ENCODE measurements at regions of chr17 and their contacts with region 1.

Region 1: DNA sequence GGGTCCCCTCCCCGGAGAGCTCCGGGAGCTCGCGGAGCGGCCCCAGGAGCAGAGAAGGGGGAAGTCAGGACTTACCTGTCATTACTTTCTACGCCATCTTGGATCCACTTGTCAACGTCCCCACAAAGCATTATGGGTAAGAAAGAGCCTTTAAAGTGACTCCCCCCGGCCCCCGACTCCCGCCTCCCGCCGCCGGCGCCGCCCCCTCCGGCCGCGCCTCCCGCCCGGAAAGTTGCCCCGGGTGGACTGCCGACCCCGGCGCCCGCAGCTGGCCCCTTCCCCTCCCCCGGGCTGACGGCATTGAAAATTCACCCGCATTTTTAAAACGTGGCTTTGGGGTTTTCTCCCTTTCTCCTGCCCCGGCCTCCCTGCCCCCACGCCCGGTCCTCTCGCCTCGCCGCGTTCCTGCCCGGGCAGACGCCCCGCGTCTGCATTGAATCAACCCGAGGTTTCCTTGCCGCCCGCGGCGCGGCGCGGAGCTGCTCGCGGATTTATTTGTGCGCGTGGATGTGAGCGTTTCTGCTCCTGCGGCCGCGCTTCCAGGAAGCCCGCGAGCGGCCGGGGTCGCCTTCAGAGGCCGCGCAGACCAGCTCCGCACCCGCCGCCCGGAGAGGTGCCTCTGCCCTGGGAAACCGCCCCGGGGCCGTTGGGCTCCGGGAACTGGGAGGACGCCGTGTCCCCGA is at the start of gene HELZ:
- DNase-seq: peak; percentile 73 to 87
- ATAC-seq: peak; percentile 50 to 78 (median 62)
- H3K4me3 ChIP-seq: peak within 1 kb of the TSS; percentile 95
- H3K4me3 Mint-ChIP-seq: peak within 1 kb of the TSS; percentile 96
- H3K27ac ChIP-seq: peak within 1 kb of the TSS; percentile 90
- H3K27ac Mint-ChIP-seq: peak within 1 kb of the TSS; percentile 84 to 94
- H3K4me1 ChIP-seq: peaks cover 42% of the 10 kb centered on the region
- H3K4me1 Mint-ChIP-seq: peaks cover 59 to 60% of the 10 kb centered on the region in 2 donors
- H3K27me3 ChIP-seq: no peaks in the 10 kb centered on the region
- H3K27me3 Mint-ChIP-seq: no peaks in the 10 kb centered on the region
- CTCF ChIP-seq: no peak
- total RNA-seq, gene HELZ: 274 to 355 (median 292) TPM

Region 2: DNA sequence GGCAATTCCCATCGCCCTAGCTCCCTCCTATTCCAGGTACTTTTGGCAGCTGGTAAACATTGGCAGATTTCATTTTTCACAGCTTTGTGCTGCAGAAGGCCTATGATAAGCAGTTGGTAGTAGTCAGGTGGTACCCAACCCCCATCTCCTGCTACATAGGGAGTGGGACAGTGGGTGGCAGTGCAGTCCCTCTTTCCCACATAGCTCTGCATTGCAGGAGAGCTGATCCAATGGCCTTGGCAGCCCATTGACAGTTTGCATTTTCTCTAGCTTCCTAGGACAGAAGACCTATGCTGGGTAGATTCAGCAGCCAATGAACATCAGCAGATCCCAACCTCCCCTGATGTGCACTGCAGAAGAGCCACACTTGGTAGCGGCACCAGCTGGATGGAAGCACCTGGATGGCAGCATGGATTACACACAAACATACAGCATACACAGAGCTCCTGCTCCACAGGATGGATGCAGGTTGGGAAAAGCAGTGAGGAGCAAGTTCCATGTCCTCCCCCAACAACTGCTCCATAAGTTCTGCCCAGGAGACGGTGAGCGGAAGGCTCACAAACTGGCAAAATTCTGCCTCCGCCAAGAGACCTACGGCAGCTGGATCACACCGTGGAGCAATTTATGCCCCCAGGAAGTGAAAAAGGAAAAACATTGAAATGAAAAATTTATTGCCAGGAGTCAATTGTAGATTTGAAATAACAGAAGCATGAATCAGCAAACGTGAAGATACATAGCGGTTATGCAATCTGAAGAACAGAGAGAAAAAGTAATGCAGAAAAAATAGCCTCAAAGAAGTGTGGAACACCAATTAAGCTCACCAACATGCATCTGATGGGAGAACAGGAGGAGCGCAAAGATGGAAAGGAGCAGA is 105.2 kb before region 1 on chr17:
- intact Hi-C with region 1: loop called (anchors 5 kb)
- DNase-seq: no peak
- ATAC-seq: no peak
- H3K4me3 ChIP-seq: no peak overlapping the region
- H3K4me3 Mint-ChIP-seq: no peak overlapping the region
- H3K27ac ChIP-seq: no peak overlapping the region
- H3K27ac Mint-ChIP-seq: peak overlapping the region; percentile 83 to 86
- H3K4me1 ChIP-seq: peaks cover 14% of the 10 kb centered on the region
- H3K4me1 Mint-ChIP-seq: peaks cover 38% of the 10 kb centered on the region in 2 donors
- H3K27me3 ChIP-seq: no peaks in the 10 kb centered on the region
- H3K27me3 Mint-ChIP-seq: no peaks in the 10 kb centered on the region
- CTCF ChIP-seq: no peak

Region 3: GRCh38 chr17:67151717-67152116 is 93.5 kb before region 1 on chr17:
- intact Hi-C with region 1: loop called (anchors 5 kb)
- DNase-seq: no peak
- ATAC-seq: no peak
- H3K4me3 ChIP-seq: no peak overlapping the region
- H3K4me3 Mint-ChIP-seq: peak overlapping the region; percentile 3
- H3K27ac ChIP-seq: no peak overlapping the region
- H3K27ac Mint-ChIP-seq: peak overlapping the region; percentile 52 to 78
- H3K4me1 ChIP-seq: peaks cover 3% of the 10 kb centered on the region
- H3K4me1 Mint-ChIP-seq: peaks cover 34 to 35% of the 10 kb centered on the region in 2 donors
- H3K27me3 ChIP-seq: no peaks in the 10 kb centered on the region
- H3K27me3 Mint-ChIP-seq: no peaks in the 10 kb centered on the region
- CTCF ChIP-seq: no peak

Region 4: GRCh38 chr17:67221062-67221998 is 23.9 kb before region 1 on chr17:
- intact Hi-C with region 1: no loop called
- DNase-seq: peak in 1 of 2 donors; percentile 78
- ATAC-seq: peak; percentile 29 to 87 (median 68)
- H3K4me3 ChIP-seq: no peak overlapping the region
- H3K4me3 Mint-ChIP-seq: peak overlapping the region; percentile 18
- H3K27ac ChIP-seq: no peak overlapping the region
- H3K27ac Mint-ChIP-seq: peak overlapping the region; percentile 37 to 80
- H3K4me1 ChIP-seq: peaks cover 21% of the 10 kb centered on the region
- H3K4me1 Mint-ChIP-seq: peaks cover 68 to 72% of the 10 kb centered on the region in 2 donors
- H3K27me3 ChIP-seq: no peaks in the 10 kb centered on the region
- H3K27me3 Mint-ChIP-seq: no peaks in the 10 kb centered on the region
- CTCF ChIP-seq: no peak

Region 5: GRCh38 chr17:67258821-67259468 is 13.7 kb after region 1 on chr17:
- intact Hi-C with region 1: loop called (anchors 1 kb)
- DNase-seq: peak; percentile 71 to 75
- ATAC-seq: peak; percentile 75 to 92 (median 85)
- H3K4me3 ChIP-seq: no peak overlapping the region
- H3K4me3 Mint-ChIP-seq: peak overlapping the region; percentile 54
- H3K27ac ChIP-seq: peak overlapping the region; percentile 45
- H3K27ac Mint-ChIP-seq: peak overlapping the region; percentile 69 to 92
- H3K4me1 ChIP-seq: peaks cover 46% of the 10 kb centered on the region
- H3K4me1 Mint-ChIP-seq: peaks cover 41 to 44% of the 10 kb centered on the region in 2 donors
- H3K27me3 ChIP-seq: no peaks in the 10 kb centered on the region
- H3K27me3 Mint-ChIP-seq: no peaks in the 10 kb centered on the region
- CTCF ChIP-seq: no peak

Region 6: GRCh38 chr17:67293251-67294203 is 48.3 kb after region 1 on chr17:
- intact Hi-C with region 1: loop called (anchors 5 kb)
- DNase-seq: peak; percentile 61 to 85
- ATAC-seq: peak; percentile 89 to 98 (median 98)
- H3K4me3 ChIP-seq: no peak overlapping the region
- H3K4me3 Mint-ChIP-seq: peak overlapping the region; percentile 35
- H3K27ac ChIP-seq: no peak overlapping the region
- H3K27ac Mint-ChIP-seq: no peak overlapping the region
- H3K4me1 ChIP-seq: peaks cover 14% of the 10 kb centered on the region
- H3K4me1 Mint-ChIP-seq: peaks cover 14 to 19% of the 10 kb centered on the region in 2 donors
- H3K27me3 ChIP-seq: no peaks in the 10 kb centered on the region
- H3K27me3 Mint-ChIP-seq: no peaks in the 10 kb centered on the region
- CTCF ChIP-seq: peak; percentile 86

Region 7: GRCh38 chr17:67366193-67367157 is 121.3 kb after region 1 on chr17 and contains the start of gene PSMD12:
- intact Hi-C with region 1: loop called (anchors 10 kb)
- DNase-seq: peak; percentile 95 to 96
- ATAC-seq: peak; percentile 94 to 100 (median 97)
- H3K4me3 ChIP-seq: peak within 1 kb of the TSS; percentile 99
- H3K4me3 Mint-ChIP-seq: peak within 1 kb of the TSS; percentile 92
- H3K27ac ChIP-seq: peak within 1 kb of the TSS; percentile 93
- H3K27ac Mint-ChIP-seq: peak within 1 kb of the TSS; percentile 86 to 98
- H3K4me1 ChIP-seq: peaks cover 12% of the 10 kb centered on the region
- H3K4me1 Mint-ChIP-seq: peaks cover 41 to 44% of the 10 kb centered on the region in 2 donors
- H3K27me3 ChIP-seq: no peaks in the 10 kb centered on the region
- H3K27me3 Mint-ChIP-seq: no peaks in the 10 kb centered on the region
- CTCF ChIP-seq: no peak
- total RNA-seq, gene PSMD12: 57.4 to 58.2 (median 58.0) TPM

Region 8: DNA sequence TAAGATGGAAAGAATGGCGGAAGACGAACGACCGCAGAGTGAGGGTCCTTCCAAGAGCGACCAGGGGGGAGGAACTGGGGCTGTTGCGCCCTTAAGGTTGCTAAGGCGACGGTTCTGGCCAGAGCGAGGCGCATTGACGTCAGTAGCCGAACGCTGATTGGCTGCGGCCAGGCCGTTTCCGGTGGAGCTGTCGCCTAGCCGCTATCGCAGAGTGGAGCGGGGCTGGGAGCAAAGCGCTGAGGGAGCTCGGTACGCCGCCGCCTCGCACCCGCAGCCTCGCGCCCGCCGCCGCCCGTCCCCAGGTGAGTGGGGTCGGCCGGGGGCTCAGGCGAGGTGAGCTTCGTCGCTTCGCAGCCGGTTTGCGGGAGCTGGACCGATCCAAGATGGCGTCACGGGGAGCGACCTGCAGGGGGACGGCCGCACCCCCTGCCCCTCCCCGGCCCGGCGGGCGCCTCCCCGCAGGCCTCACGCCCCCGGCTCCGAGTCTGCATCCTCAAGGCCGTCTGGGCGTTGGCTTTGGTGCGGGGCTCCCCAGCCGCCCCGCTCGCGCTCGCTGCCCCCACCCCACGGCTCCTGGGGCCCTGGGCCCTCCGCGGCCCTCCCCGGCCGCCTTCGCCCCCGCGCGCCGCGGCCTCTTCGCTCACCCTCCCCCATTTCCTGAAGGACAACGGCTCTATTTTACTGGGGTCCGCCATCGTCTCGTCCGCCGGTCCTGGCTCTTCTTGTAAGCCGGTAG is 1267.2 kb after region 1 on chr17 and contains the start of gene PRKAR1A:
- intact Hi-C with region 1: loop called (anchors 5 kb)
- DNase-seq: peak; percentile 97 to 98
- ATAC-seq: peak; percentile 73 to 91 (median 84)
- H3K4me3 ChIP-seq: peak within 1 kb of the TSS; percentile 90
- H3K4me3 Mint-ChIP-seq: peak within 1 kb of the TSS; percentile 99
- H3K27ac ChIP-seq: peak within 1 kb of the TSS; percentile 100
- H3K27ac Mint-ChIP-seq: peak within 1 kb of the TSS; percentile 98
- H3K4me1 ChIP-seq: peaks cover 14% of the 10 kb centered on the region
- H3K4me1 Mint-ChIP-seq: peaks cover 72 to 75% of the 10 kb centered on the region in 2 donors
- H3K27me3 ChIP-seq: no peaks in the 10 kb centered on the region
- H3K27me3 Mint-ChIP-seq: no peaks in the 10 kb centered on the region
- CTCF ChIP-seq: no peak
- total RNA-seq, gene PRKAR1A: 215 to 267 (median 234) TPM

Measured in natural killer cell (primary cell).